Naive thymus-derived CD4-positive, alpha-beta T cell (primary cell): ENCODE measurements at regions of chr13 and their contacts with region 1.

Region 1: GRCh38 chr13:100392709-100393641 is 195.6 kb downstream of the GGACT start:
- DNase-seq: peak in 1 of 9 donors; percentile 69
- ATAC-seq: peak; percentile 89
- H3K4me3 ChIP-seq: no peak overlapping the region
- H3K4me3 Mint-ChIP-seq: peak overlapping the region in 2 of 10 donors; percentile 21 to 54
- H3K27ac ChIP-seq: no peak overlapping the region
- H3K27ac Mint-ChIP-seq: peak overlapping the region in 2 of 9 donors; percentile 10 to 88
- H3K4me1 ChIP-seq: no peaks in the 10 kb centered on the region
- H3K4me1 Mint-ChIP-seq: peaks cover 0 to 33% (median 4%) of the 10 kb centered on the region in 7 donors
- H3K27me3 ChIP-seq: no peaks in the 10 kb centered on the region
- H3K27me3 Mint-ChIP-seq: no peaks in the 10 kb centered on the region

Region 2: GRCh38 chr13:99995589-99996380 is 397.2 kb before region 1 on chr13:
- CTCF ChIA-PET with region 1: no interaction called
- POLR2A ChIA-PET with region 1: no interaction called
- intact Hi-C with region 1: loop called in 1 of 2 experiments (anchors 10 kb)
- DNase-seq: peak in 1 of 9 donors; percentile 26
- ATAC-seq: no peak
- H3K4me3 ChIP-seq: no peak overlapping the region
- H3K4me3 Mint-ChIP-seq: peak overlapping the region in 4 of 10 donors; percentile 23 to 57 (median 32)
- H3K27ac ChIP-seq: no peak overlapping the region
- H3K27ac Mint-ChIP-seq: peak overlapping the region in 5 of 9 donors; percentile 22 to 81 (median 63)
- H3K4me1 ChIP-seq: peaks cover 0 to 4% of the 10 kb centered on the region in 2 donors
- H3K4me1 Mint-ChIP-seq: peaks cover 0 to 26% (median 11%) of the 10 kb centered on the region in 7 donors
- H3K27me3 ChIP-seq: peaks cover 39 to 68% of the 10 kb centered on the region in 2 donors
- H3K27me3 Mint-ChIP-seq: peaks cover 78 to 88% (median 83%) of the 10 kb centered on the region in 5 donors

Region 3: GRCh38 chr13:100409132-100409531 is 16.2 kb after region 1 on chr13:
- CTCF ChIA-PET with region 1: no interaction called
- POLR2A ChIA-PET with region 1: no interaction called
- intact Hi-C with region 1: loop called in 1 of 2 experiments (anchors 1 kb)
- DNase-seq: no peak
- ATAC-seq: no peak
- H3K4me3 ChIP-seq: no peak overlapping the region
- H3K4me3 Mint-ChIP-seq: no peak overlapping the region
- H3K27ac ChIP-seq: no peak overlapping the region
- H3K27ac Mint-ChIP-seq: no peak overlapping the region
- H3K4me1 ChIP-seq: no peaks in the 10 kb centered on the region
- H3K4me1 Mint-ChIP-seq: no peaks in the 10 kb centered on the region
- H3K27me3 ChIP-seq: no peaks in the 10 kb centered on the region
- H3K27me3 Mint-ChIP-seq: no peaks in the 10 kb centered on the region

Region 4: GRCh38 chr13:100434010-100434763 is 41.2 kb after region 1 on chr13:
- CTCF ChIA-PET with region 1: no interaction called
- POLR2A ChIA-PET with region 1: no interaction called
- intact Hi-C with region 1: loop called in 1 of 2 experiments (anchors 2 kb)
- DNase-seq: no peak
- ATAC-seq: no peak
- H3K4me3 ChIP-seq: no peak overlapping the region
- H3K4me3 Mint-ChIP-seq: peak overlapping the region in 1 of 10 donors; percentile 52
- H3K27ac ChIP-seq: no peak overlapping the region
- H3K27ac Mint-ChIP-seq: peak overlapping the region in 3 of 9 donors; percentile 1 to 68 (median 61)
- H3K4me1 ChIP-seq: no peaks in the 10 kb centered on the region
- H3K4me1 Mint-ChIP-seq: peaks cover 0 to 39% (median 4%) of the 10 kb centered on the region in 7 donors
- H3K27me3 ChIP-seq: no peaks in the 10 kb centered on the region
- H3K27me3 Mint-ChIP-seq: no peaks in the 10 kb centered on the region

Region 5: DNA sequence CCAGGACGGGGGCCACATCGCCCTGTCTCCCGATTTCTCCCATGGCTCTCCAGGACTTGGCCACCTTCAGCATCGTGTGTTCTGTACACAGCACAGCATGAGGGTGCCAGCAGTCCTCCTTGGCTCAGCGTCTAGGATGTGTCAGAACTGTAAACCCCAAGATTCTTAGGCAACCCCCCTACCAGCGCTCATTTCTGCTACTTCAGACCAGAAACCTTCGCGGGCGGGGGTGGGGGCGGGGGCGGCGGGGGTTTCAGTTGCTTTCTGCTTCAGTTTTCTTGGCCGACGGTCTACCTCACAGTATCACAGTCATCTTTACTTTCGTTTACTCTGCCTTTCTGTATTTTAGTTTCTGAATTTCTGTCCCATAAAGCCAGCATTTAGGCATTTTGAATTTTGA is 113.2 kb after region 1 on chr13:
- CTCF ChIA-PET with region 1: no interaction called
- POLR2A ChIA-PET with region 1: no interaction called
- intact Hi-C with region 1: loop called in 1 of 2 experiments (anchors 5 kb)
- DNase-seq: peak in 1 of 9 donors; percentile 39
- ATAC-seq: no peak
- H3K4me3 ChIP-seq: peak overlapping the region; percentile 21
- H3K4me3 Mint-ChIP-seq: peak overlapping the region; percentile 51 to 83 (median 72)
- H3K27ac ChIP-seq: no peak overlapping the region
- H3K27ac Mint-ChIP-seq: peak overlapping the region in 7 of 9 donors; percentile 2 to 84 (median 58)
- H3K4me1 ChIP-seq: peaks cover 4 to 5% of the 10 kb centered on the region in 2 donors
- H3K4me1 Mint-ChIP-seq: peaks cover 6 to 25% (median 15%) of the 10 kb centered on the region in 7 donors
- H3K27me3 ChIP-seq: no peaks in the 10 kb centered on the region
- H3K27me3 Mint-ChIP-seq: no peaks in the 10 kb centered on the region